ENCODE measurements at regions of chr3 and their contacts with region 1.

Region 1: GRCh38 chr3:97658668-97659285 is 105.8 kb upstream of the ARL6 start:
- DNase-seq: peak; percentile 20
- H3K4me3 ChIP-seq: no peak overlapping the region; a peak in 1 of 4 replicates
- H3K27ac ChIP-seq: no peak overlapping the region
- H3K4me1 ChIP-seq: no peaks in the 10 kb centered on the region; a peak in 1 of 4 replicates
- H3K27me3 ChIP-seq: no peaks in the 10 kb centered on the region
- CTCF ChIP-seq: peak; percentile 75
- EP300 ChIP-seq: no peak
- RAD21 ChIP-seq: peak; percentile 82

Region 2: GRCh38 chr3:97359977-97360376 is 298.8 kb before region 1 on chr3:
- CTCF ChIA-PET with region 1: no interaction called
- POLR2A ChIA-PET with region 1: no interaction called
- DNase-seq: no peak
- H3K4me3 ChIP-seq: no peak overlapping the region
- H3K27ac ChIP-seq: no peak overlapping the region
- H3K4me1 ChIP-seq: no peaks in the 10 kb centered on the region
- H3K27me3 ChIP-seq: no peaks in the 10 kb centered on the region
- CTCF ChIP-seq: no peak
- EP300 ChIP-seq: no peak
- RAD21 ChIP-seq: no peak

Region 3: DNA sequence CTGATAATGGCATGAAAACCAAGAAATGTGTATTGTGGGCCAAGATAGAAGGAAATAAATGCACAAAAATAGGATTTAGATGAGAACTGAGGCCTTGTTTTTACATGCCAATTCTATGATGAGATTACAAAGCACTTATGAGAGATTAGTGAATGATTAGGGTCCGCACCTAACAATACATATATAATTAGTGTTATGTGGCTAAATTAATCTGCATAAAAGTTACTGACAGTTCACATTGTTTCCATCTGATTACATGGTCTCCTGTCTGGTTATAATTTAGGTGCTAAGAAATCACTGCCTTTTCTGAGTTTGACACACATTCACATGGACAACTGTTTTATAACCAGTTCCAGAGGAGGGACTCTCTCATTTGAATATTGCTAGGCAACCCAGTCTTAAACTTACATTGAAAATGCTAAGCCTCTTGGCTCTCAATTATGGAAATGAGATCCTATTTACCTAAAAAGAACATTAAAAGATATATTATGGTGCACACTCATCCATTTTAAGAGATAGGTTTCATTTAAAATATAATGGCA is 11.3 kb before region 1 on chr3:
- CTCF ChIA-PET with region 1: no interaction called
- POLR2A ChIA-PET with region 1: no interaction called
- DNase-seq: no peak
- H3K4me3 ChIP-seq: no peak overlapping the region
- H3K27ac ChIP-seq: no peak overlapping the region
- H3K4me1 ChIP-seq: no peaks in the 10 kb centered on the region
- H3K27me3 ChIP-seq: no peaks in the 10 kb centered on the region
- CTCF ChIP-seq: no peak
- EP300 ChIP-seq: no peak
- RAD21 ChIP-seq: no peak

Region 4: GRCh38 chr3:97670952-97671351 is 12.2 kb after region 1 on chr3:
- CTCF ChIA-PET with region 1: interaction called, 10 read pairs
- POLR2A ChIA-PET with region 1: no interaction called
- DNase-seq: no peak
- H3K4me3 ChIP-seq: no peak overlapping the region
- H3K27ac ChIP-seq: no peak overlapping the region
- H3K4me1 ChIP-seq: no peaks in the 10 kb centered on the region; a peak in 1 of 4 replicates
- H3K27me3 ChIP-seq: no peaks in the 10 kb centered on the region
- CTCF ChIP-seq: no peak
- EP300 ChIP-seq: no peak
- RAD21 ChIP-seq: no peak

Region 5: DNA sequence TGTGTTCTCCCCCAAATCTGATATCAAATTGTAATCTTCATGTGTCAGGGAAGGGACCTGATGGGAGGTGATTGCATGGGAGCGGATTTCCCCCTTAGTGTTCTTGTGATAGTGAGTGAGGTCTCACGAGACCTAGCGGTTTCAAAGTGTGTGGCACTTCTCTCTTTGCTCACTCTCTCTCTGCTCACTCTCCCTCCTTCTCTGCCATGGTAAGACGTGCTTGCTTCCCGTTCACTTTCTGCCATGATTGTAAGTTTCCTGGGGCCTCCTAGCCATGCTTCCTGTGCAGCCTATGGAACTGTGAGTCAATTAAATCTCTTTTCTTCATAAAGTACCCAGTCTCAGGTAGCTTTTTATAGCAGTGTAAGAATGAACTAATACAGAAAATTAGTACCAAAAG is 574.7 kb after region 1 on chr3:
- CTCF ChIA-PET with region 1: no interaction called
- POLR2A ChIA-PET with region 1: no interaction called
- DNase-seq: no peak
- H3K4me3 ChIP-seq: no peak overlapping the region
- H3K27ac ChIP-seq: no peak overlapping the region
- H3K4me1 ChIP-seq: no peaks in the 10 kb centered on the region
- H3K27me3 ChIP-seq: no peaks in the 10 kb centered on the region
- CTCF ChIP-seq: no peak
- EP300 ChIP-seq: no peak
- RAD21 ChIP-seq: no peak

Measured in SK-N-SH (cell line).